ENCODE measurements at regions of chr2 and their contacts with region 1.

Region 1: DNA sequence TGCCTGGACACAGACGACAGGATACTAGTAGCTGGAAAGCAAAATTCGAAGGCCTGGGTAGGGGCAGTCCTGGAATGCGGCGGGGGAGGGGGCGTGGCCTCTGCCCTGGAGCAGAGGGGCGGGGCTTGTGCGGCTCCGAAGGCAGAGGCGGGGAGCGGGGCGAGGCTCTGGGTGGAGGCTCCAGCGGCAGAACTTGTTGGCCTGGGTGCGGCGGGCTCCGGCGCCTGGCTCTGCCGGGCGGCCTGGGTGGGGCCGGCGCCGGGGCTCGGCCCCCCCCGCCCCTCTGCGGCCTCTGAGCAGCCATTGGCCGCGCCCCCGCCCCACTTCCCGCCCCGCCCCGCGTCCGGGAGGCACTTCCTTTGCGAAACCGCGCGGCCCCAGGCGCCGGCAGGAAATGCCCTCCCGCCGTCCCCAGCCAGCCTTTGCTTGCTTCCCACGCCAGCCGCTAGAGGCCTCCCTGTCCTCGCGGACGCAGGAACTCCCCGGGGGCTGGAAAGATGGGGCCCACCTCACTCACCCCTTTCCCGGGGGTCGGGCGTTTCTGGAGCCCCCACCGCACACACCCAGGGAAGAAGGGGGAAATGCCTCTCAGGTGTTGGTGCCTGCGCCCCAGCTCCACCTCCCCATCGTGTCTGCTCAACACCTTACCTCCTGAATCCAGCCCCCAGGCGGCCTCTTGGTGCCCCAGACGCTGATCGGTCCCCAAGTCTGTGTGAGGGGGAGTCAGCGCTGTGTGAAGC is 6.7 kb downstream of the CTDSP1 start:
- DNase-seq: peak; percentile 98 to 99 (median 98)
- ATAC-seq: peak; percentile 78 to 91 (median 88)
- H3K4me3 ChIP-seq: peak overlapping the region in 11 of 12 donors; percentile 18 to 66 (median 57)
- H3K27ac ChIP-seq: peak overlapping the region; percentile 82 to 96 (median 92)
- H3K4me1 ChIP-seq: peaks cover 12 to 58% (median 46%) of the 10 kb centered on the region in 12 donors
- H3K27me3 ChIP-seq: no peaks in the 10 kb centered on the region
- CTCF ChIP-seq: peak; percentile 57 to 91 (median 76)
- POLR2A ChIP-seq: peak in 1 of 2 donors; percentile 39

Region 2: GRCh38 chr2:218466016-218466521 is 59.7 kb after region 1 on chr2:
- intact Hi-C with region 1: loop called (anchors 2 to 5 kb)
- DNase-seq: no peak
- ATAC-seq: peak in 1 of 4 donors; percentile 26
- H3K4me3 ChIP-seq: no peak overlapping the region
- H3K27ac ChIP-seq: no peak overlapping the region
- H3K4me1 ChIP-seq: peaks cover 0 to 5% (median 1%) of the 10 kb centered on the region in 12 donors
- H3K27me3 ChIP-seq: no peaks in the 10 kb centered on the region
- CTCF ChIP-seq: peak; percentile 28 to 68 (median 50)
- POLR2A ChIP-seq: no peak

Region 3: DNA sequence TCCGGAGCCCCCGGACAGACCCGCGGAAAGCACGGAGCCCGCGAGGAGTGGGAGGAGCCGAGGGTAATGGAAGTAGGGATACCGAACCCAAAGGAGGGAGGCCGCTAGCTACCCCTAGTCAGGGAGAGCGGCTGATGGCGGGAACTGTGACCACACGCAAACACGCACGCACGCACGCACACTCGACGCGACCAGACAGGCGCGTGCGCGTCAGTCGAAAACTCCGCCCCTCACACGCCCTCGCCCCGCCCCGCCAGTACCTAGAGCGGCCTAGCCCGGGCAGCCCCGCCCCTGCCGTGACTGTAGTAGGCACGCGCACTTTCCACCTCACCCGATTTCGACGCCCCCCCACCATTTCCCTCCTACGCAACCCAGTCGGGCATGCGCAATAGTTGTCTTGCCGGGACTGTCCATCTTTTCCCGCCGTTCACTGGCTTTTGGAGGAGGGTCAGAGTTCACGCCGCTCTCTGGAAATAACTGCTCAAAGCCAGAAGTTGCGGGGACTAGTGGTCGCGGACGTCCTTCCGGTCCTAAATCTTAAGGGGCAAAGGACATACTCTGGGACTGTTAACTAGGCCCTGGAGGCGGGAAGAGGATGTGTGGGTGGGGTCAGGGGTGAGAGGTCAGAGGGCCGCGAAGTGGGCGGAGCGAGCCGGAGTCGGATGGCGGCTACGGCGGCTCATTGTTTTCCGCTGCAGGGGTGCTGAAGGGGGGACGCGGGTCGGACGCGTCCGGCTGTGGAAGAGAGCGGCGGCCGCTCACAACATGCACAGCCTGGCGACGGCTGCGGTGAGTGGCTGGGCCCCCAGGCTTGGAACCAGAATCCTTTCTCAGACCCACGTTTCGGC is 162.0 kb after region 1 on chr2 and contains the starts of genes CNOT9 and USP37:
- intact Hi-C with region 1: loop called in 4 of 10 experiments (anchors 1 to 10 kb)
- DNase-seq: peak; percentile 99 to 100 (median 100)
- ATAC-seq: peak; percentile 96 to 99 (median 98)
- H3K4me3 ChIP-seq: peak within 1 kb of the TSS; percentile 60 to 90 (median 80)
- H3K27ac ChIP-seq: peak within 1 kb of the TSS; percentile 83 to 99 (median 94)
- H3K4me1 ChIP-seq: peaks cover 8 to 53% (median 31%) of the 10 kb centered on the region in 12 donors
- H3K27me3 ChIP-seq: no peaks in the 10 kb centered on the region
- CTCF ChIP-seq: peak in 1 of 12 donors; percentile 6
- POLR2A ChIP-seq: peak in 1 of 2 donors; percentile 60
- total RNA-seq, gene CNOT9: 19.4 to 34.8 (median 23.1) TPM
- total RNA-seq, gene USP37: 5.2 to 10.3 (median 7.8) TPM

Region 4: DNA sequence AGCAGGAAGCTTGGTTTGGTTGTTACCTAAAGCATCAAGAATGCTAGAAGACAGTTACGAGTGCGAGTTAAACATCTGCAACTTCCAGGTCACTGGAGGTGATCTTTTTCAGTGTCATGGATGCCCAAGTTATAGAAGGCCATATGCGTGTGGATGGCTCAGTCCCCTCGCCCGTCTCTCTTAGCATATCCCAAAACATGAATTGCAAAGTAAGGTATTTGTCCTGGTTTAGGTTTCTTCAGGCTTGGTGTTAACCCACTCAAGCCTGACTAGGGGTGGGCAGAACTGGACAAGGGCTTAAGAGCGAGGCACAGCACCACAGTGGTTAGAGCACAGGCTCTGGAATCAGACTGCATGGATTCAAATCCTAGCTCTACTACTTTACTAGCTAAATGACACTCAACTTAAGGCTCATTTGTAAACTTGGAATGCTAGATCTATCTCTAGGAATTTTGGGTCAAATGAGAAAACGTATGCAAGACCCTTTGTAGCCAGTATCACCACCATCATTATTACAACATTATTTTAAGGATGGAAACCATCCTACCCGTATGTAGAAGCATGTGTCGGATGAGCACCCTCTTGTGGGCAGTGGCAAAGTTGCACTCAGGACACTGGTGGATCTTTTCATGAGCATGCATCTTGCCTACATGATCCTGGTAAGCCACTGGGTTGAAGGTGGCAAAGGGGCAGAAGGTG is 241.9 kb after region 1 on chr2:
- intact Hi-C with region 1: loop called in 7 of 10 experiments (anchors 2 to 10 kb)
- DNase-seq: peak in 1 of 5 donors; percentile 44
- ATAC-seq: peak; percentile 15 to 73 (median 69)
- H3K4me3 ChIP-seq: no peak overlapping the region
- H3K27ac ChIP-seq: no peak overlapping the region
- H3K4me1 ChIP-seq: peaks cover 0 to 7% (median 0%) of the 10 kb centered on the region in 12 donors
- H3K27me3 ChIP-seq: no peaks in the 10 kb centered on the region
- CTCF ChIP-seq: peak; percentile 62 to 82 (median 74)
- POLR2A ChIP-seq: no peak

Region 5: GRCh38 chr2:218659258-218659987 is 253.0 kb after region 1 on chr2 and contains the starts of genes BCS1L and ZNF142:
- intact Hi-C with region 1: loop called in 5 of 10 experiments (anchors 5 to 10 kb)
- DNase-seq: peak; percentile 92 to 95 (median 95)
- ATAC-seq: peak; percentile 89 to 98 (median 96)
- H3K4me3 ChIP-seq: peak within 1 kb of the TSS; percentile 60 to 96 (median 88)
- H3K27ac ChIP-seq: peak within 1 kb of the TSS; percentile 45 to 91 (median 82)
- H3K4me1 ChIP-seq: peaks cover 0 to 45% (median 25%) of the 10 kb centered on the region in 12 donors
- H3K27me3 ChIP-seq: no peaks in the 10 kb centered on the region
- CTCF ChIP-seq: no peak
- POLR2A ChIP-seq: peak in 1 of 2 donors; percentile 81
- total RNA-seq, gene BCS1L: 27.3 to 53.2 (median 43.7) TPM
- total RNA-seq, gene ZNF142: 18.1 to 46.0 (median 21.8) TPM

Region 6: GRCh38 chr2:218671654-218672566 is 265.5 kb after region 1 on chr2 and contains the starts of genes RNF25 and STK36:
- intact Hi-C with region 1: loop called in 1 of 10 experiments (anchors 5 kb)
- DNase-seq: peak; percentile 87 to 91 (median 89)
- ATAC-seq: peak; percentile 96 to 99 (median 98)
- H3K4me3 ChIP-seq: peak within 1 kb of the TSS; percentile 75 to 97 (median 90)
- H3K27ac ChIP-seq: peak within 1 kb of the TSS; percentile 14 to 87 (median 82)
- H3K4me1 ChIP-seq: peaks cover 0 to 21% (median 14%) of the 10 kb centered on the region in 12 donors
- H3K27me3 ChIP-seq: no peaks in the 10 kb centered on the region
- CTCF ChIP-seq: no peak
- POLR2A ChIP-seq: peak in 1 of 2 donors; percentile 78
- total RNA-seq, gene RNF25: 9.7 to 23.8 (median 15.0) TPM
- total RNA-seq, gene STK36: 4.7 to 16.2 (median 7.9) TPM